ENCODE measurements at regions of chr14 and their contacts with region 1.

Region 1: GRCh38 chr14:91323671-91324605 is 79.4 kb upstream of the GPR68 start:
- ATAC-seq: peak; percentile 64 to 90 (median 83)
- H3K4me3 ChIP-seq: peak overlapping the region in 2 of 5 donors; percentile 1 to 16
- H3K27ac ChIP-seq: peak overlapping the region; percentile 9 to 48
- H3K4me1 ChIP-seq: peaks cover 11 to 16% of the 10 kb centered on the region in 2 donors

Region 2: GRCh38 chr14:91418387-91419043 is 94.6 kb after region 1 on chr14:
- in situ Hi-C with region 1: loop called in 2 of 9 experiments (anchors 10 to 25 kb)
- ATAC-seq: peak; percentile 11 to 60 (median 23)
- H3K4me3 ChIP-seq: peak overlapping the region; percentile 70 to 90 (median 83)
- H3K27ac ChIP-seq: no peak overlapping the region
- H3K4me1 ChIP-seq: peaks cover 14 to 15% of the 10 kb centered on the region in 2 donors

Region 3: DNA sequence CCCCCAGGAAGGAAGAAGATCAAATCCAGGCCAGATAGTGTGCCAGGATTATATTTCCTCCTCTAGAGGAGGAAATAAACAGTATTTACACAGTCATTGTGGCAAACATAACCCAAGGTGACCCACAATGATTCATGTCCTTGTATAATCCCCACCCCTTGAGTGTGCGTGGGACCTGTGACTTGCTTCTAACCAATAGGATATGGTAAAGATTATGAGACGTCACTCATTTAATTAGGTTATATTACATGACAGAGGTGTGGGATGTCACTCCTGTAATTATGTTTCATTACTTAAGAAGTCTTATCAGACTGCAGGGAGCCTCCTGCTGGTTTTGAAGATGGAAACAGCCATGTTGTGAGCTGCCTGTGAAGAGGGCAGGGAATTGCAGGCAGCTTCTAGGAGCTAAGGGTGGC is 420.1 kb after region 1 on chr14:
- in situ Hi-C with region 1: no loop called
- ATAC-seq: no peak
- H3K4me3 ChIP-seq: no peak overlapping the region
- H3K27ac ChIP-seq: no peak overlapping the region
- H3K4me1 ChIP-seq: no peaks in the 10 kb centered on the region

Measured in motor neuron (in vitro differentiated cells).